Mammary epithelial cell (primary cell): ENCODE measurements at regions of chr2 and their contacts with region 1.

Region 1: DNA sequence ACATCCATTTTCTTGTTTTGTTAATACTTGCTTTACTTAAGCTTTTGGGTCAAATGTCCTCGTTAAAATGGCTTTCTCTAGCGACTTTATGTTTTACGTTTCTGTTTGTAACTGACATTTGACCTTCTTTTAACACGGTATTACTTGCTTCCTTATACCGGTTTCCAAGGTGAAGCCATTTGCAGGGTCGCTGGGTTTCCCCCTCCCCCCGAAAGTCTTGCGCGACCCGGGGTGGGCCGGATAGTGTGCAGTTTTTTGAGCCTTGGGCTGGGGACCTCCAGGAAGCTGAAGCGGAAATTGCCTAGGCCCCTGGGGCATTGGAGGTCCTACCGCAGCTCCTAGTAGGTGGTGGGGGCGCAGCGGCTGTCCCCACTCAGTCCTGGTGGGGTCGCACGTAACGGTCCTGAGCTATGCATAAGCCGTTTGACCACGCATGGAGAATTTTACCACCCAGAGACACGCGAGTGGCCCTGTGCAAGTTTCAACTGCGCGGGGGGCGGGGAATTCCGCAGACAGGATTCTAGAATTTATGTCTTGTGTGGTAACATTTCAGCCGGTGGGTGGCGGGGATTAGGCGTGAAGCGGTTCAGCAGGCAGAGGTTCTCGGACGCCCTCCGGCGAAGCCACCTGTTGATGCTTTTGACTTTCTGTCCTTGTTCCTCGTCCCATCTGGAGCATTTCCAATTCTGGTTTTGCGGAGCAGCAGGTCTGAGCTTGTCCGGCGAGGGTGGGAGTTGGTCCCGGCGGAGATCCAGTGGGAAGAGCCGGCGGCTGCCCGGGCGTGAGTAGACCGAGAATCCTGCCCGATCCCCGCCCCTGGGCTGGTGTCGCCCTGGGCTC is 2.4 kb downstream of the CFLAR start:
- DNase-seq: peak; percentile 98
- H3K4me3 ChIP-seq: peak overlapping the region; percentile 70 to 77 (median 74)
- H3K27ac ChIP-seq: peak overlapping the region; percentile 90
- H3K4me1 ChIP-seq: peaks cover 34% of the 10 kb centered on the region
- H3K27me3 ChIP-seq: no peaks in the 10 kb centered on the region
- CTCF ChIP-seq: peak; percentile 18 to 64

Region 2: GRCh38 chr2:201071479-201072200 is 46.7 kb before region 1 on chr2 and contains the starts of genes HYCC2 and NDUFB3:
- CTCF ChIA-PET with region 1: no interaction called
- dilution Hi-C with region 1: no loop called
- in situ Hi-C with region 1: no loop called
- intact Hi-C with region 1: loop called (anchors 1 kb)
- DNase-seq: peak; percentile 93
- H3K4me3 ChIP-seq: peak within 1 kb of the TSS; percentile 84 to 90 (median 87)
- H3K27ac ChIP-seq: peak within 1 kb of the TSS; percentile 93
- H3K4me1 ChIP-seq: peaks cover 12% of the 10 kb centered on the region
- H3K27me3 ChIP-seq: no peaks in the 10 kb centered on the region
- CTCF ChIP-seq: peak in 1 of 2 donors; percentile 49
- total RNA-seq, gene HYCC2: 15.0 to 15.2 TPM
- total RNA-seq, gene NDUFB3: 23.7 to 84.9 TPM

Region 3: DNA sequence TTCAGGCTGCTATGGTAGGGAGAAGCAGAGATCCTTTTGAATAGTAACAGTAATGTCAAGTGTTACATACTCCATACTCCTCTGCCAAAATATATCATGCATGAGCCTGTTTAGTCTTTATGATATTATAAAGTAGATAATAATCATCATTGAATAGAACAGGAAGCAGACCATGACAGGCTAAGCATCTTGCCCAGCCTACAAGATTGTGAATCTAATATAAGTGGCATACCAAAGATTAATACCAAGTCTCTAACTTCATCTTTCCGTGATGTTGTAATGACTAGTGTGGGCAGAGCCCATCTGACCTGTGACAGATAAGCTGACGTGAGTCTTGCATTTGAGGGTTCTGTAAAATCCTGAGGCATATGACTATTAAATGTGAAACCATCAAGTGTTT is 33.5 kb before region 1 on chr2:
- CTCF ChIA-PET with region 1: no interaction called
- dilution Hi-C with region 1: loop called (anchors 5 kb)
- in situ Hi-C with region 1: no loop called
- intact Hi-C with region 1: no loop called
- DNase-seq: no peak
- H3K4me3 ChIP-seq: no peak overlapping the region
- H3K27ac ChIP-seq: no peak overlapping the region
- H3K4me1 ChIP-seq: no peaks in the 10 kb centered on the region
- H3K27me3 ChIP-seq: no peaks in the 10 kb centered on the region
- CTCF ChIP-seq: no peak

Region 4: DNA sequence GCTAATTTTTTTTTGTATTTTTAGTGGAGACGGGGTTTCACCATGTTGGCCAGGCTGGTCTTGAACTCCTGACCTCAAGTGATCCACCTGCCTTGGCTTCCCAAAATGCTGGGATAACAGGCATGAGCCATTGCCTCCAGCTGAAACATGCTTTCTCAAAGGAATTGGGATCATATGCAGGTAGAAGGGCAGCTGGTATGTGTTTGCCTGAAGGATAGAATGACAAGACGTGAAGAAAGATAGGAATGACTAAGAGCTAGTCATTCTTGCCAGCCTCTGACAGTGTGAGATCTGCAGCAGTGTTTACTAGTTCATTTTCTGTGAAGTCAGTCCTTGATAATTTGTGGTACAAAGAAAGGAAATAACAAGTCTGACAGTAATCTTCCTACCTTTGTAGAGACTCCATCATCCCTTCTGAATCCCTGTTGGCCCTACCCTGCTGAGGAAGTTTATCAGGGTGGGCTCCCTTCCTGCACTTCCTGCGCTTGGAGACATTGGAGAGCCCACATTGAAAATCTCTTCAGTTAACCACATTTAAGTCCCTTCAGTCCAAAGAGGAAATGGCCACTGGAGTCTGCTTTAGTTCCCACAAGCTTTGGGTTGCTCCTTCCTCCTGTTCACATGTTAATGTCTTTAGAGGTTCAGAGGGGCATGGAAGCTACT is 12.3 kb after region 1 on chr2:
- CTCF ChIA-PET with region 1: no interaction called
- dilution Hi-C with region 1: no loop called
- in situ Hi-C with region 1: no loop called
- intact Hi-C with region 1: loop called (anchors 2 kb)
- DNase-seq: peak; percentile 96
- H3K4me3 ChIP-seq: no peak overlapping the region
- H3K27ac ChIP-seq: peak overlapping the region; percentile 84
- H3K4me1 ChIP-seq: peaks cover 61% of the 10 kb centered on the region
- H3K27me3 ChIP-seq: no peaks in the 10 kb centered on the region
- CTCF ChIP-seq: no peak

Region 5: DNA sequence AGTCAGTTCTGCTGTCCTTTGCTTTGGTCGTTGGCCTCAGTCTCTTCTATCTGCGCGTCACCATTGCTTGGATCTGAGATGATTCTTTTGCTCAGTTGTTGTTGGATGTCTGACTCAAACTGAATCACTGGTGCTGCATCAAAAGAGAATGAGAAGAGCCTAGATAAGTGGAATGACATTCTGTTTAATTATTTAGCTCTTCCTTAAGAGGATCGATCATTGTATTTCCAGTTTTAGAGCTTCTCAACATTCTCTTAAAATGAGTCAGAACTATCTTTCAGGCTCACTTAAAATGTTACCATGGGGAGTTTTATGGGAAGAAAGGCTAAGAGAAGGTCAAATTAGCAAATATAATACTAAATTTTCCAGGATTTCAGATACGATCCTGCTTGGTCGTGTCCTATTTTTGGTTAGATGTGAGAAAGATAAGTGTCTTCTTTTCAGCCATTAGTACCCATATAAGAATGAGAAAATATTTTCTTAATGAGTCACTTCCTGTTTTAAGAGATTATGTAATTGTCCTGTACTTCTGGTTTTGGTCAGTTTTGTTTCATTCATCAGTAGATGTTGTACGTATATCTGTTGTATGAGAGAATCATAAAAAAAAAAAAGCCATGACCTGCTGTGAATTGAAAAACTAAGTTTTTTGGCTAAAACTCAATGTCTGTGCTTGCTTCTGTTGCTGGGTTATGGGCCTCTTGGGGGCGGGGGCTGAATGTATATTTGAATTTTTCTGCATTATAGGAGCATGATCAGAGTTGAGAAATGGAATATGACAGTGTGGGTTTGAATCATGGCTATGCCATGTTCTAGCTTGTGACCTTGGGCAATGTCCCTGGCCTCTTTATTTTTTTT is 33.0 kb after region 1 on chr2:
- CTCF ChIA-PET with region 1: interaction called, 5 read pairs
- dilution Hi-C with region 1: loop called (anchors 5 kb)
- in situ Hi-C with region 1: loop called in 1 of 2 experiments (anchors 5 kb)
- intact Hi-C with region 1: loop called (anchors 1 kb)
- DNase-seq: peak; percentile 88
- H3K4me3 ChIP-seq: peak overlapping the region in 2 of 3 experiments; percentile 27 to 30
- H3K27ac ChIP-seq: peak overlapping the region; percentile 100
- H3K4me1 ChIP-seq: peaks cover 44% of the 10 kb centered on the region
- H3K27me3 ChIP-seq: no peaks in the 10 kb centered on the region
- CTCF ChIP-seq: no peak

Region 6: DNA sequence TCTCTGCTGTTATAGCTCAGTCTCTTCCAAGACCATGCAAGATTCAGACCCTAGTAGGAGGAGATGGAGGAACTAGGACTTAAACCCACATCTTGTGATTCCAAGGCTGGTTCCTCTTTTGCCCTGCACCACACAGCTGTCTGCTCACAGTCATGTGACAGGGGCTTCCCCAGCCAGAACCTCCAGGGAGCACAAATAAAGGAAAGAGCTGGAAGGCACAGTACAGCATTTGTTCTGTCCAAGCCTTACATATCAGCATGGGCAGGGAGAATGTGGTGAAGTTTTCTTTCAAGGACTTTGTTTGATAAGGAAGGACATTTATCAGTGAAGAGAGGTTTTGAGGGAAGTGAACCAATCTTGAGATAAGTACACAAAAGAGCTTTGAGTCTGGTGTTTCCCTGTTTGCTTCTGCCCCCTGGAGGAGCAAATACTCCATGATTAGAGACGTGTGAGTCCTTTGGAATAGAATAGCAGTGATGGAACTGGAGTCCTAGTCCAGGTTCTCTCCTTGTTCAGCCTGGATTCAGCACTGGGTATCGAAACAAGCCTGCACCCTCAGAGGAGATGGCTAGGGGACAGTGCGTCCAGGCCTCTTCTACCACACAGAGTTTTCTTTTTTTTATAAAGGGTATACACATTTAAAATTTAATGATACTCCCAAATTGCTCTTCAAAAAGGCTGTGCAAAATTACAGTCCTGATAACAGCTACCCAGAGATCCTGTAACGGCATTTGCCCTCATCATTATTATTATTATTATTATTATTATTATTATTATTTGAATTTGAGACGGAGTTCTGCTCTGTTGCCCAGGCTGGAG is 40.0 kb after region 1 on chr2:
- CTCF ChIA-PET with region 1: interaction called, 6 read pairs
- dilution Hi-C with region 1: loop called (anchors 5 kb)
- in situ Hi-C with region 1: loop called in 1 of 2 experiments (anchors 5 kb)
- intact Hi-C with region 1: loop called (anchors 1 kb)
- DNase-seq: peak; percentile 76
- H3K4me3 ChIP-seq: no peak overlapping the region
- H3K27ac ChIP-seq: peak overlapping the region; percentile 81
- H3K4me1 ChIP-seq: peaks cover 14% of the 10 kb centered on the region
- H3K27me3 ChIP-seq: no peaks in the 10 kb centered on the region
- CTCF ChIP-seq: peak; percentile 70 to 79

Region 7: DNA sequence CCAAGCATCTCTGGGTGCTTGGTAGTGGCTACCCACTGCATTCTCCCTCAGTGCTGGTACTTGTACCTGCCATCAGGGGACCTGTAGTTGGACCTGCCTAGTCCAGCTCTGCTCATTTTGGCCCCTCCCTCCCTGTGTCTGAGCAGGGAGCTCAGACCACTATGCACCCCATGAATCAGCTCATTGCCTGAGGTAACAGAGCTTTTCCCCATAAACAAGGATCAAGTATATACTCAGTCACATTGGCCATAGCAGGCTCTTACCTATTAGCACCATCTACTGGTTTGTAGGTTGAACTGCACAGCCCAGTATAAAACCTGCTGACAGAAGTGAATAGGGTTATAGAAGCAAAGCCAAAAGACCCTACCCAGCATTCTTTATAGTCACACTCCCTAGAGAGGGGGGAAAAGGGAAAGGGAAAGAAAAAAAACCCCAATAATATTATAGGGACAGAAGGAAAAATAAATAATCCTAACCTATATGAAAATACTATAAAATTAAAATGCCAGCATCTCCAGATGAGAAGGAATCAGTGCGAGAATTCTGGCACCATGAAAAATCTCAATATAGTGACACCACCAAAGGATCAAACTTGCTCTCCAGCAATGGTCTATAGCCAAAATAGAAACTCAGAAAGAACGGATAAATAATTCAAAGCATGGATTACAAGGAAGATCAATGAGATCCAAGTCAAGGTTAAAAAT is 245.7 kb after region 1 on chr2:
- CTCF ChIA-PET with region 1: no interaction called
- dilution Hi-C with region 1: no loop called
- in situ Hi-C with region 1: no loop called
- intact Hi-C with region 1: loop called (anchors 5 kb)
- DNase-seq: peak; percentile 70
- H3K4me3 ChIP-seq: no peak overlapping the region
- H3K27ac ChIP-seq: no peak overlapping the region
- H3K4me1 ChIP-seq: peaks cover 5% of the 10 kb centered on the region
- H3K27me3 ChIP-seq: no peaks in the 10 kb centered on the region
- CTCF ChIP-seq: peak; percentile 84 to 87